Left colon (tissue), 2 donors: ENCODE measurements at regions of chr11 and their contacts with region 1.

Region 1: DNA sequence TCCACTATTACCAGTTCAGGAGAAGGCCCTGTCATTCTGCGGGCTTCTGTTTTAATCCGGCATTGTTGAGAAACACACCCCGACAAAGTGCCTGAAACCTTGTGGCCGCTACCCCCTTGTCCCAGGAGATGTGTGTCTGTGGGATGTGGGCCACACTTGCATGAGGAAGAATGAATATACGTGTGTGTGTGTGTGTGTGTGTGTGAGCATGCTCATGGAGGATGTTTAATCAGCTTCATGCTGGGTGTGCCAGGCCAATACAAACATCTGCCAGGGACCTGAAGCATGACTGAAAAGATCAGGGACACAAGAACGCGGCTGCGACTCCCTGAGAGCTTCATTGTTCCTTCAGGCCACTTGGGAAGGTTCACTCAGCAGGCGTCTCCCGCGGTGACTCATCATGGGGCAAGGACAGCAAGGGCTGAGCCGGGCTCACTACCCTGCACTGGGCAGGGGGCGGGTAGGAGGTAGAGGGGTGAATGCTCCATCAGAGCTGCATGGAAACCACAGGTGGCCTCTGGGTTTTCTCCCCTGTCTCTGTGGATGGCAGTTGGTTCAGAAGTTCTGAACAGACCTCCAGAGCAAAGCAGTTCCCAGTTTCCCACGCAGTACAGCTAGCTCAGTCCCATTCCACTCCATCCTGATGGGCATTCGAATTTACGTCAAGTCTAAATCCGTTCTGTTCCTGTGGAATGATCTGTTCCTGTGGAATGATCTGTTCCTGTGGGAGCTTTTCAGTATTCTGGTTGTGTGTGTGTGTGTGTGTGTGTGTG is 7.0 kb upstream of the MALAT1 start:
- DNase-seq: peak; percentile 86 to 90
- ATAC-seq: peak; percentile 58

Region 2: GRCh38 chr11:65251476-65251875 is 240.3 kb before region 1 on chr11:
- intact Hi-C with region 1: no loop called
- DNase-seq: no peak
- ATAC-seq: no peak

Region 3: DNA sequence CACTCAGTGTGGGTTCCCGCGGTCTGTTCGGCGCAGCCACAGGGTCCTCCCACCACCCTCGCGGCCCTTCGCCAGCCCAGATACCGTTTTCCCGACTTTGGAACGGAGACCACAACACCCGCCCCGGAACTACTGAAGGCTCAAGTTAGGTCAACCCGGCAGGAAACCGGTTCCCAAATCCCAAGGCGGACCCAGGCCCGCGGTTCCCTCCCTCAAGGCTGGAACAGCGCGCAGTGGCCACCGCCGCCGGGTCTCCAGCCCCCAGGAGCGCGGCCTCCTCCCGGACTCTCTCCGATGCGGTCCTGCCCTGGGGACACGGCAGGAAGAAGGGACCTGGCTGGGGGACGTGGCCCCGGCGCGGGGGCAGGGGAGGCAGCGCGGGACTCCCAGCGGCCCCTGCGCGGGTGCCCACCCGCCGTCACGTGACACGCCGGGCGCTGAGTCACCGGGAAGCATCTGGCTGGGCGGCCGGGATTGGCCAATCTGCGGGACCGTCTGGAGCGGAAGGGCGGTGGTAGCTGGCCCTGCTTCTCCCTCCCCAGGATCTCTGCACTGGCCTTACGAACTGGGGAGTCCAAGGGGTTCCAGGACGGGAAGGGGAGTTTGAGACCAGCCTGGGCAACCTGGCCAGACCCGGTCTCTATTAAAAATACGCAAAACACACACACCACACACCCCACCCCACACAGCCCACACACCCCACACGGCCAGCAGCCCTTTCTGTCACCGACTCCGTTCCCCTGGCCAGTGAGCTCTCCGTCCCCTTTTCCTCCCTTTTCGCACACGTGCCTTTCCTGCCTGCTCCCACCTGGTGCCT is 14.4 kb before region 1 on chr11:
- intact Hi-C with region 1: loop called in 1 of 2 experiments (anchors 2 kb)
- DNase-seq: peak; percentile 97 to 98
- ATAC-seq: peak; percentile 76